Heart left ventricle (tissue), 16 donors: ENCODE measurements at regions of chr6 and their contacts with region 1.

Region 1: DNA sequence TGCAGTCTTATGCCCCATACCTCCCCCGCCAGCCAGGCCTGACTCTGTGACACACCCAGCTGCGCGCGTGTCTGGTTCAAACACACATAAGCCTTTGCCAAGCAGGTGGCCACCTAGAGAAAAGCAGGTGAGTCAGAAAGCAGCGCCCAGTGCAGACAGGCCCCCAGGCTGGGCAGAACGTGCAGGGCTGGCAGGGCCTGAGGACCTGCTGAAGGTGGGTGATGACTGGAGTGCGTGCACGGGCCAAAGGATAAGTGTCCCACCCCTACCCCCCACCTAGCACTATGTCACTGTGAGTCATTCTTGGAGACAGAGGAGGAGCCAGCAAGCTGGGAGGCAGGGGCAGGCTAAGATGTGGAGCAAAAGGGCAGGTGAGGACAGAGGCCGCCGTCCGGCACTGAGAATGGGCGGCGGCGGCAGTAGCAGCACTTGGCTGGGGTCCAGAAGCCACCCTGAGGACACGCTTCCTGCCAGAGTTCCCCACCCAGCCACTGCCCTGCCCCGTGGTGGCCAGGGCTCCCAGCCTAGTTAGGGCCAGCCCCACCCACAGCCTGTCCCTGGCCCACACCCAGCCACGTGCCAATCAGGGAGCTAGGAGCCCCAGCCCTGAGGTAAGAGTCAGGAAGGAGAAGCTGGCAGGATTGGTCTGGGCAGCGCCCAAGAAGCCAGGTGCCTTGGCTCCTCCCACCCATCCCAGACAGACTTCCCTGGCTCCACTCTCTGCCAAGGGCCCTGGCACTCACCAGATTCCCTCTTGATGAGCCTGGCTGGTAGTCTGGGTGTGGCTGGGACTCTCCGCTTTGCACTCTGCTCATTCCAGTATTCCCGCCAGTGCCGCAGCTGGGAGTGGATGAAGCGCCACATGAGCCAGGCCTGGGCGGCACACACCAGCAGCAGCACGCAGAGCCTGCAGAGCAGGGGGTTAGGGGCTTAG is 72.7 kb downstream of the TRAM2 start:
- DNase-seq: peak; percentile 89 to 94 (median 92)
- ATAC-seq: peak; percentile 84 to 90 (median 86)
- H3K4me3 ChIP-seq: no peak overlapping the region
- H3K27ac ChIP-seq: peak overlapping the region; percentile 50 to 88 (median 78)
- H3K4me1 ChIP-seq: peaks cover 11 to 75% (median 47%) of the 10 kb centered on the region in 12 donors
- H3K27me3 ChIP-seq: no peaks in the 10 kb centered on the region
- CTCF ChIP-seq: no peak
- POLR2A ChIP-seq: no peak

Region 2: GRCh38 chr6:52577022-52577777 is 73.1 kb after region 1 on chr6 and contains the start of gene TRAM2:
- intact Hi-C with region 1: loop called in 8 of 10 experiments (anchors 1 to 5 kb)
- DNase-seq: peak; percentile 87 to 95 (median 91)
- ATAC-seq: peak; percentile 63 to 91 (median 78)
- H3K4me3 ChIP-seq: peak within 1 kb of the TSS; percentile 50 to 98 (median 91)
- H3K27ac ChIP-seq: peak within 1 kb of the TSS; percentile 91 to 100 (median 99)
- H3K4me1 ChIP-seq: peaks cover 9 to 52% (median 44%) of the 10 kb centered on the region in 12 donors
- H3K27me3 ChIP-seq: no peaks in the 10 kb centered on the region
- CTCF ChIP-seq: peak in 5 of 12 donors; percentile 18 to 34 (median 27)
- POLR2A ChIP-seq: peak in 1 of 2 donors; percentile 41
- total RNA-seq, gene TRAM2: 9.8 to 19.0 (median 12.1) TPM

Region 3: DNA sequence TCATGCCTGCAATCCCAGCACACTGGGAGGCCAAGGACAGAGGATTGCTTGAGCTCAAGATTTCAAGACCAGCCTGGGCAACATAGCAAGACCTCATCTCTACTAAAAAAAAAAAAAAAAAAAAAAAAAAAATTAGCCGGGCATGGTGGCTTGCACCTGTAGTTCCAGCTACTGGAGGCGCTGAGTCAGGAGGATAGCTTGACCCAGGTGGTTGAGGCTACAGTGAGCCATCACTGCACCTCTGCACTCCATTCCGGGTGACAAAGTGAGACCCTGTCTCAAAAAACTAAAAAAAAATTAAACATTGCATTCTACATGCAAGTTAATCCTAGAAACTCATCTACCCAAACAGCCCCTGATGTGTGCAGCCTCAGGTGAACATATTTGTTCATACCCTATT is 80.1 kb after region 1 on chr6:
- intact Hi-C with region 1: loop called in 4 of 10 experiments (anchors 5 kb)
- DNase-seq: no peak
- ATAC-seq: no peak
- H3K4me3 ChIP-seq: no peak overlapping the region
- H3K27ac ChIP-seq: no peak overlapping the region
- H3K4me1 ChIP-seq: peaks cover 0 to 11% (median 5%) of the 10 kb centered on the region in 12 donors
- H3K27me3 ChIP-seq: no peaks in the 10 kb centered on the region
- CTCF ChIP-seq: no peak
- POLR2A ChIP-seq: no peak